Activated CD4-positive, alpha-beta T cell treated with anti-CD3 and anti-CD28 coated beads, Interleukin-2, amount 10 ng/mL, durations not matched to agents 7 days and 5 days (primary cell): ENCODE measurements at regions of chr16 and their contacts with region 1.

Region 1: DNA sequence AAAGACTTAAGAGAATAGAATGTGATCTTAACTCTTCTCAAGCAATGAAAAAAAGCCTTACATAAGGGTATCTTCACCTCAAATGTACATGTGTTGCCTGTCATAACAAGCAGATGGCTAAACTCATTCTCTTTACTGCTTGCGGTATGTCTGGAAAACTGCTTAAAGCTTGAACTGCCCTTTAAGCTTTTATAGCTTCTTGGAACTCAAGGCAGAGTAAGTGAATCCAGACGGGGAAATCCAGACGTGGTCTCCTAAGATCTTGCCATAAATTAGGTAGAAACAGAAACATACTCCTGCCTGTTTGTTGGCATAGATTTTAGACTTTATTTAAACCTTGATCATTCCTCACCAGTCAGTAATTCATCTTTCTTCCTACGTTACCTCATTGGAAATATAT is 19.6 kb downstream of the CLUAP1 start:
- DNase-seq: no peak
- H3K4me3 Mint-ChIP-seq: no peak overlapping the region
- H3K27ac Mint-ChIP-seq: peak overlapping the region; percentile 17
- H3K4me1 Mint-ChIP-seq: peaks cover 20% of the 10 kb centered on the region
- H3K27me3 Mint-ChIP-seq: no peaks in the 10 kb centered on the region

Region 2: DNA sequence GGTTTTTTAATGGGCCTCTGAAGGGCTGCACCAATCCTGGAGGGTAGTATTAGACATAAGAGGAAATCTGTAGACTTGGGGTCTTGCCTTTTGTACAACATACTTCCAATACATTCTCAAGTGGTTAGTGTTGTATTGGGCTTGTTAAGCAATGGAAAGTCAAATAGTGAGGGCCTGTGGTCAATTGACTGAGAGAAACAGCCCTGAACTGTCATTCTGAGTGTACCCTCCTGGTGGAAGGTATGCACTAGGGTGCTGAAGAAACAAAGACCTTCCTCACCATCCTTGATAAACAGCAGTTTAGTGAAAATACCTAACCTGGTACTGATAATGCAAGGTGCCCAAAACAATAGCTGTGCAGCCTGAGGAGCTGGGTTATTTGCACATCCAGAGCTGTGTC is 142.5 kb before region 1 on chr16:
- CTCF ChIA-PET with region 1: no interaction called
- POLR2A ChIA-PET with region 1: no interaction called
- DNase-seq: no peak
- H3K4me3 Mint-ChIP-seq: no peak overlapping the region
- H3K27ac Mint-ChIP-seq: no peak overlapping the region
- H3K4me1 Mint-ChIP-seq: no peaks in the 10 kb centered on the region
- H3K27me3 Mint-ChIP-seq: no peaks in the 10 kb centered on the region

Region 3: GRCh38 chr16:3509470-3509928 is 10.9 kb before region 1 on chr16:
- CTCF ChIA-PET with region 1: interaction called, 14 read pairs
- POLR2A ChIA-PET with region 1: no interaction called
- DNase-seq: peak; percentile 90
- H3K4me3 Mint-ChIP-seq: peak overlapping the region; percentile 51
- H3K27ac Mint-ChIP-seq: peak overlapping the region; percentile 96
- H3K4me1 Mint-ChIP-seq: peaks cover 75% of the 10 kb centered on the region
- H3K27me3 Mint-ChIP-seq: no peaks in the 10 kb centered on the region

Region 4: GRCh38 chr16:3536271-3536731 is 15.9 kb after region 1 on chr16:
- CTCF ChIA-PET with region 1: no interaction called
- POLR2A ChIA-PET with region 1: no interaction called
- DNase-seq: no peak
- H3K4me3 Mint-ChIP-seq: no peak overlapping the region
- H3K27ac Mint-ChIP-seq: peak overlapping the region; percentile 62
- H3K4me1 Mint-ChIP-seq: peaks cover 2% of the 10 kb centered on the region
- H3K27me3 Mint-ChIP-seq: no peaks in the 10 kb centered on the region